BJ (cell line): ENCODE measurements at regions of chr17 and their contacts with region 1.

Region 1: DNA sequence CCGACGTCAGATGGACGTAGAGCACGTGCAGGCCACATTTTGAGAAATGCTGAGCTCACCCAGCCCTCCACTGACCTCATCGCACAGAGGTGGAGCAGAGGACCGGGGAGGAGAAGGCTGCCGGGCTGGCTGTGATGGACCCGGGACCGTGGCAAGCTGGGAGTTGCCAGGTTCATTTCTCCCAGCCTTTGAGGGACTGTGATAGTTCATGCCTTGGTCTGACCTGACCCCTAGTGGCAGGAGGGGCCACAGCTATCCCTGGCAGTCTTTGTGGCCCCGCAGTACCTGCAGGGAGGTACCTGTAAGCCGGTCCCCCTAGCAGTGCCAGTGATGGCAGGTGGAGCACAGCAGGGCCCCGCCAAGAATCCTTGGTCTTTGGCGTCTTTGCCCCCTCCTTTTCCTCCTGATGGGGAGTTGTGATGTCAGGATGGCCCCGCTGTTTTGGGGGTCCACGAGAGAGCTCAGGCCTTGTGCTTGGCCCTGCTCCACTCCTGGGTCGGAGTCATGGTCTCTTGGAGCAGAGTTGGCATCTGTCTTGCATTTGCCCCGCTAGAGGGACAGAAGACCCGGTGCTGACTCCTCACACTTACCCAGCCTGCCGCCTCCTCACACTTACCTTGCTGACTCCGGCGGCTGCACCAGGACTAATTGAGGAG is 50.4 kb downstream of the OR1D5 start:
- DNase-seq: no peak
- H3K4me3 ChIP-seq: no peak overlapping the region
- H3K27me3 ChIP-seq: no peaks in the 10 kb centered on the region
- CTCF ChIP-seq: peak; percentile 84

Region 2: DNA sequence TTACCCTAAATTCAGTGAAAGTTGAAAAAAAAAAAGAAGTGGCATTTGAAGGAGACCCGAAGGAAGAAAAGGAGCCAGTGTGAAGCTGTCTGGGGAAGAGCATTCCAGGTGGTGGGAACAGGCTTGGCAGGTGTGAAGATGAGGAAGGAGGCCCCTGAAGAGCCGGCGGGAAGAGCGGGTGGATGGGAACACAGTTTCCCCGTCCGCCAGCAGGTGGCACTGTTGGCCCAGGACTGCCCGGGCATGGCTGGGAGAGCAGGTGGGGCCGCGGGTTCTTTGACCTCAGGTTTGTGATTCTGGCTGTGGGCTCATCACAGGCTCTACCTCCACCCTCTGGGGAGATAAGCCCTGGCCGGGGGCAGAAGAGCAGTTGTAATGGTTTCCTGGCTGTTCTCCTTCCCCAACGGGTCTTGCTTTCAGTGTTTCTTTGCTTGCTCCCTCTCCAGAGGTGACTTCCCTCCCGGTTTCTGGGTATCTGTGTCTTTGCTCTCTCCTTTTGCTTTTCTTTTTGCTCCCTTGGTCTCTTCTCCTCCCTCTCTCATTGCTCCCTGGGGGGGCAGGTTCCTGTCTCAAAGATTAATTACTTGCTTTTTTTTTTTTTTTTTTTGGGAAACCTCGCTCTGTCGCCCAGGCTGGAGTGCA is 184.5 kb before region 1 on chr17:
- CTCF ChIA-PET with region 1: interaction called, 68 read pairs
- POLR2A ChIA-PET with region 1: no interaction called
- DNase-seq: no peak
- H3K4me3 ChIP-seq: no peak overlapping the region
- H3K27me3 ChIP-seq: no peaks in the 10 kb centered on the region
- CTCF ChIP-seq: peak; percentile 95

Region 3: GRCh38 chr17:2853111-2853721 is 159.8 kb before region 1 on chr17:
- CTCF ChIA-PET with region 1: interaction called, 83 read pairs
- POLR2A ChIA-PET with region 1: no interaction called
- DNase-seq: no peak
- H3K4me3 ChIP-seq: peak overlapping the region; percentile 67
- H3K27me3 ChIP-seq: no peaks in the 10 kb centered on the region; the same call in 1 of the 2 replicates
- CTCF ChIP-seq: no peak

Region 4: DNA sequence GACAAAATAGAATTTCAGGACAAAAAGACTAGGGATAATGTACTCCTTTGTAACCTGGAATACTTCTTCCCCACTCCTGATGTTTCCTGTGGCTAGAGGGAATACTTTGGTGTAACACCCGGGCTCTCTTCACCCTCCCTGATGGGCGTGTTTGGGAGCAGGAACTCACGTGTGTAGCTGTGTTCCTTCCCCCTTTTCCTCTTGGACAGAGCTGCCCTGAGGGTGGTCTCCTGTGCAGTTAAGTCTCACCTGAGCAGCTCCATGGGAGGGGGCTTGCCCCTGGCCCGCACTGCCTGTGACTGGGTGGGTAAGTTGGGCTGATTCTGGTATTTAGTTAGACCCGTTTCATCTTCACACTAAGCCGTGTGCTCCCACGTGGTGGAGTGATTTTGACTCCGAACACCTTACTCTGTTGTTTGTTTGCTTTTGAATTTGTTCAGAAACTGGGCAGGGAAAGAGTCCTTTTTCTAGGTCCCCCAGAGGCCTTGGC is 37.5 kb before region 1 on chr17:
- CTCF ChIA-PET with region 1: no interaction called
- POLR2A ChIA-PET with region 1: no interaction called
- DNase-seq: no peak
- H3K4me3 ChIP-seq: peak overlapping the region; percentile 43
- H3K27me3 ChIP-seq: no peaks in the 10 kb centered on the region
- CTCF ChIP-seq: no peak